Activated CD8-positive, alpha-beta T cell treated with anti-CD3 and anti-CD28 coated beads for 36 hours (primary cell): ENCODE measurements at regions of chr6 and their contacts with region 1.

Region 1: DNA sequence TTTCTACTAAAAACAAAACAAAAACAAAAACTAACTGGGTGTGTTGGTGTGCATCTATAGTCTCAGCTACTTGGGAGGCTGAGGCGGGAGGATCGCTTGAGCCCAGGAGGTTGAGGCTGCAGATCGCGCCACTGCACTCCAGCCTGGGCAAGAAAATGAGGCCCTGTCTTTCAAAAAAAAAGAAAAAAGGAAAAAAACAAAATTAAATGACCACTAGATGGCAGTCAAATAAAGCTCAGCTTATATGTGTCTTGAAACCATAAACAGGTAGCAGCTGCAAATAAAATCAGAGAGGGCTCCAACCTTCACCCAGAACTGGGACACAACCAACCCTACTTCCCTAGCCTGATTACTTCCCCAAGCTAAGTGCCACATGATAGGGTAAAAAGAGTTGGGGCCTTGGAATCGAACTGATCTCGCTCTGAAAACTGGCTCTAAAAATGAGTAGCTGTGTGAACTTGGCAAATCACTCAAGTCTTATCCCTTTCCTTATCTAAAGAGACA is 67.1 kb upstream of the ADGRF4 start:
- DNase-seq: peak; percentile 19
- ATAC-seq: peak; percentile 64
- H3K4me3 Mint-ChIP-seq: no peak overlapping the region
- H3K27ac Mint-ChIP-seq: no peak overlapping the region
- H3K4me1 Mint-ChIP-seq: peaks cover 14% of the 10 kb centered on the region
- H3K27me3 Mint-ChIP-seq: no peaks in the 10 kb centered on the region
- CTCF ChIP-seq: peak; percentile 67

Region 2: DNA sequence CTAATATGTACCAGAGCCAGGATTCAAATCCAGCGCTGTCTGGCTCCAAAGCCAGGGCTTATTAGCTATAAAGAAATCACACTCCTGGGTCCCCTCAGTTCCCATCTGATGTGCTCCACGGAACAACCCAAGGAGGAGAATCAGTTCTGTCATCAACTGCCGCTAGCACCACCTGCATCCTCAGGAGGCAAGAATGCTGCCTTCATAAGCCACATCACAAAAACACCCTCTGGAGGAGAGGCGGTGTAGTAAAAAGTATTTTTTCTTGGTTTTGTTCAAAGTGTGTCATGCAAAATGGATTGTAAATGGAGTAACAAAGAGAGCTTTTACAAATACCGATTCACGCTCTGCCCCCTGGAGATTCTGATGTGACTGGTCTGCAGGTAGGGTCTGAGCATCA is 378.7 kb before region 1 on chr6:
- CTCF ChIA-PET with region 1: no interaction called
- POLR2A ChIA-PET with region 1: no interaction called
- intact Hi-C with region 1: no loop called
- DNase-seq: no peak
- ATAC-seq: peak; percentile 60
- H3K4me3 Mint-ChIP-seq: no peak overlapping the region
- H3K27ac Mint-ChIP-seq: no peak overlapping the region
- H3K4me1 Mint-ChIP-seq: peaks cover 12% of the 10 kb centered on the region
- H3K27me3 Mint-ChIP-seq: no peaks in the 10 kb centered on the region
- CTCF ChIP-seq: no peak

Region 3: DNA sequence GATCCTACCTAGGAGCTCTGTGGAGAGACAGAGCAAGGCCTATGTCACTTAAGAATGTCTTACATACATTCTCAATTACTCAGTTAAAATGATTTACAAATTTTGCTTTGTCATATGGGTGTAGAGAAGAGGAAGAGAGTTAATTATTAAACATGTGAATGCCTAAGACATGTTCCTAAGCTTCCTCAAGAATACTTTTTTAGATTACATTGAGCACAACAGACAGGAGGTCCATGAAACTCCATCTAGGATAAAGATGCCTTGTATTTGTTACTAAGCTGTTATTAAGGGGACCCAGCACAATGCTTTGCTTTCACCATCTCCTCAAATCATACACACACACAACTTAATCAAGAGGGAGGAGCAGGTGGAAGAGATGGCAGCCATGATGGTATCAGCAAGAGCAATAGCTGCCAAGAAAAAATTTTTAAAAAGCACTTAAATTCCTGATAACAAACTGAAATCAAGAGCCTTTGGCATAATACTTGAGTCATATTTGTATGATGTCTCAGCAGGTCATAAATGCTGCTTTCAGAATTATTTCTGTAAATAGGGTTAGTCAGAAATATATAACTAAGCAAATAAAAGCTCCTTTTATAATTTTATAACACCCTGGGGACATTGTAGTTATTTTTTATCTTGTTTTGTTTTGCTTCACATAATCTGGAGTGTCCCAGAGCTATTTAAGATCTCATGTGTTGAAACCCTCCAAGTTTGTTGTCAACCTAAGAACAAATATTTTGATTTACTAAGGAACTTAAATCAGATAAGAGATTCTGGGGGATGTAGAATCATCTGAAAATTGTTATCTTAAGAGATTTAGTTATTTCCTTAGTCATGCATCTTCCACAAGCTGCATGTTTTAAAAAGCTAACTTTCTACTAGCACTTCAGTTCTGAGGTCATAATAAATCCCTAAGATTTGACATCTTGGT is 223.7 kb before region 1 on chr6:
- CTCF ChIA-PET with region 1: interaction called, 10 read pairs
- POLR2A ChIA-PET with region 1: no interaction called
- intact Hi-C with region 1: no loop called
- DNase-seq: no peak
- ATAC-seq: no peak
- H3K4me3 Mint-ChIP-seq: no peak overlapping the region
- H3K27ac Mint-ChIP-seq: no peak overlapping the region
- H3K4me1 Mint-ChIP-seq: no peaks in the 10 kb centered on the region
- H3K27me3 Mint-ChIP-seq: no peaks in the 10 kb centered on the region
- CTCF ChIP-seq: no peak

Region 4: GRCh38 chr6:47599512-47599911 is 31.8 kb before region 1 on chr6:
- CTCF ChIA-PET with region 1: interaction called, 10 read pairs
- POLR2A ChIA-PET with region 1: no interaction called
- intact Hi-C with region 1: no loop called
- DNase-seq: no peak
- ATAC-seq: no peak
- H3K4me3 Mint-ChIP-seq: no peak overlapping the region
- H3K27ac Mint-ChIP-seq: no peak overlapping the region
- H3K4me1 Mint-ChIP-seq: no peaks in the 10 kb centered on the region
- H3K27me3 Mint-ChIP-seq: no peaks in the 10 kb centered on the region
- CTCF ChIP-seq: no peak

Region 5: DNA sequence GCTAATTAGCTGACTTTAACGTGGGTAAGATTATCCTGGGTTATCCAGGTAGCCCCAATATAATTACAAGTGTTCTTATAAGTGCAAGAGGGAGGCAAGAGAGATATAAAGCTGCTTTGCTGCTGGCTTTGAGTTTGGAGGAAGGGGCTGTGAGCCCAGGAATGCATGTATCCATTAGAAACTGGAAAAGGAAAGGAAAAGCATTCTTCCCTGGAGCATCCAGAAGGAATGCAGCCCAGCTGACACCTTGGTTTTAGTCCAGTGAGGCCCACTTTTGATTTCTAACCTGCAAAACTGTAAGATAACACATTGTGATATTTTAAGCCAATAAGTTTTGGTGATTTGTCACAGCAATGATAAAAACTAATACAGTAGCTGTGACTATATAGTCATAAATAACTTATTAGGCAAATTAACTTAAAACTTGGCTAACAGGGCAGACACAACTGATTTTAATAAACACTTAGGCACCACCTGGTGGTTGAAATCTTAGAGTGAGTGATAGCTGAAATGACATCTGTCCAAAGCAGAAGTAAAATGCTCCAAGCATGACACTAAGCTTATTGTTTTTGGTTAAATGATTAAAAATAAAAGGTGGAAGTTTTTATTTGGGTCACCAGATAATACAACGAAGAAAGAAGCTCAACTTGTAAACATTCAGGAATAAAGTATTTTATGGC is 102.7 kb after region 1 on chr6:
- CTCF ChIA-PET with region 1: interaction called, 50 read pairs
- POLR2A ChIA-PET with region 1: no interaction called
- intact Hi-C with region 1: loop called (anchors 2 kb)
- DNase-seq: no peak
- ATAC-seq: no peak
- H3K4me3 Mint-ChIP-seq: no peak overlapping the region
- H3K27ac Mint-ChIP-seq: no peak overlapping the region
- H3K4me1 Mint-ChIP-seq: peaks cover 4% of the 10 kb centered on the region
- H3K27me3 Mint-ChIP-seq: peaks cover 5% of the 10 kb centered on the region
- CTCF ChIP-seq: peak; percentile 41

Region 6: DNA sequence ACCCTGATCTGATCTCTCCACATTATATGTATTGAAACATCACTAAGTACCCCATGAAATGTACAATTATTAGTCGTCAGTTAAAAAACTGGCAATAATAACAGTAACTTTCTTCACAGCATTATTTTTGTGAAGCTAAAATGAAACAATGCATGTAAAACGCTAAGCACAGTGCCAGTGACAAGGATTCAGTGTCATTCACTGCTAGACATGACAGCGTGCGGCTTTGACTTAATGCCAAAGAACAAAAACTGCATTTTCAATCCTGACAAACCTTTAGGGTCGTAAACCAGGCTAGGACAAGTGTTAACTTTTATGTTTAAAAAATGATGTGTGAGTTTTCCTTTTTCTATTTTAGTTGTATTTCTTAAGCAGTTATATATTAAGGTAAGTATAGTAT is 141.7 kb after region 1 on chr6:
- CTCF ChIA-PET with region 1: interaction called, 103 read pairs
- POLR2A ChIA-PET with region 1: no interaction called
- intact Hi-C with region 1: no loop called
- DNase-seq: no peak
- ATAC-seq: no peak
- H3K4me3 Mint-ChIP-seq: no peak overlapping the region
- H3K27ac Mint-ChIP-seq: no peak overlapping the region
- H3K4me1 Mint-ChIP-seq: no peaks in the 10 kb centered on the region
- H3K27me3 Mint-ChIP-seq: peaks cover 3% of the 10 kb centered on the region
- CTCF ChIP-seq: no peak

Region 7: GRCh38 chr6:47787620-47788497 is 156.5 kb after region 1 on chr6:
- CTCF ChIA-PET with region 1: interaction called, 103 read pairs
- POLR2A ChIA-PET with region 1: interaction called, 3 read pairs
- intact Hi-C with region 1: no loop called
- DNase-seq: peak; percentile 66
- ATAC-seq: peak; percentile 82
- H3K4me3 Mint-ChIP-seq: no peak overlapping the region
- H3K27ac Mint-ChIP-seq: no peak overlapping the region
- H3K4me1 Mint-ChIP-seq: peaks cover 2% of the 10 kb centered on the region
- H3K27me3 Mint-ChIP-seq: peaks cover 29% of the 10 kb centered on the region
- CTCF ChIP-seq: peak; percentile 92